ENCODE measurements at regions of chr3 and their contacts with region 1.

Region 1: GRCh38 chr3:151124476-151124875 is 39.0 kb downstream of the MED12L start:
- DNase-seq: no peak
- H3K4me3 ChIP-seq: no peak overlapping the region
- CTCF ChIP-seq: no peak

Region 2: GRCh38 chr3:150913133-150913922 is 211.1 kb before region 1 on chr3:
- in situ Hi-C with region 1: loop called (anchors 10 kb)
- DNase-seq: no peak
- H3K4me3 ChIP-seq: no peak overlapping the region
- CTCF ChIP-seq: no peak

Region 3: DNA sequence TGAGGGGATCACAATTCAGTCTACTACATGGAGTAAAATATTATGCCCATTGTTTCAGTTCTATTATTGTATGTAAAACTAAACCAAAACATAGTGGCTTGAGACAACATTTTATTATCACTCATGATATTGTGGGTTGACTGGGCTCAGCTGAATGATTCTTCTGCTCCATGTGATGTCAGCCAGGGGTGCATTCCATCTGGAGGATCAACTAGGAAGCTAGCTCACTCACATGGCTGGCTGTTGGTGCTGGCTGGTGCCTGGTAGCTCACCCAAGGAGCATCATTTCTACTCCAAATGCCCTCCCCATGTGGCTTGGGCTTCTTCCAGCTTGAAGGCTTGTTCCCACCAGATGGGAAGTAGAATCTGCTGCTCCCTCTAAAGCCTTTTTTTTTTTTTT is 100.1 kb before region 1 on chr3:
- in situ Hi-C with region 1: no loop called
- DNase-seq: no peak
- H3K4me3 ChIP-seq: no peak overlapping the region
- CTCF ChIP-seq: no peak

Region 4: DNA sequence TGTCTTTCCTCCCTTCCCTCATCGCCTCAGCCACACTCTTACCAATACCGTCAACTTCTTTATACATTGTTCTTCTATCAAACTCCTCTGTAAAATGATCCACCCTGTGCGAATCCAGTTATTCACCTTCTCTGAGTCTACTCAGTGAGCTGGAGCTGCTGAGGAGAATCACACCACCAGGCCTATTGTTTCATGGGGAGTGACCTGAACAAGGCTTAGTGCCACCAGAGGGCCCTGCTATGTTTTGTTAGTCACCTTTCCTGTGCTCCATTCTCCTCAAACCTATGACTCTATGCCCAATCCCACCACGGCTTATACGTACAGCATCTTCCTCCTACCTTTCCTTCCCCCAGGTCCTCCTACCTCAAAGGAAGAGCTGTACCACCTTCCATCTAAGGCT is 89.4 kb before region 1 on chr3:
- in situ Hi-C with region 1: no loop called
- DNase-seq: no peak
- H3K4me3 ChIP-seq: no peak overlapping the region
- CTCF ChIP-seq: no peak

Region 5: DNA sequence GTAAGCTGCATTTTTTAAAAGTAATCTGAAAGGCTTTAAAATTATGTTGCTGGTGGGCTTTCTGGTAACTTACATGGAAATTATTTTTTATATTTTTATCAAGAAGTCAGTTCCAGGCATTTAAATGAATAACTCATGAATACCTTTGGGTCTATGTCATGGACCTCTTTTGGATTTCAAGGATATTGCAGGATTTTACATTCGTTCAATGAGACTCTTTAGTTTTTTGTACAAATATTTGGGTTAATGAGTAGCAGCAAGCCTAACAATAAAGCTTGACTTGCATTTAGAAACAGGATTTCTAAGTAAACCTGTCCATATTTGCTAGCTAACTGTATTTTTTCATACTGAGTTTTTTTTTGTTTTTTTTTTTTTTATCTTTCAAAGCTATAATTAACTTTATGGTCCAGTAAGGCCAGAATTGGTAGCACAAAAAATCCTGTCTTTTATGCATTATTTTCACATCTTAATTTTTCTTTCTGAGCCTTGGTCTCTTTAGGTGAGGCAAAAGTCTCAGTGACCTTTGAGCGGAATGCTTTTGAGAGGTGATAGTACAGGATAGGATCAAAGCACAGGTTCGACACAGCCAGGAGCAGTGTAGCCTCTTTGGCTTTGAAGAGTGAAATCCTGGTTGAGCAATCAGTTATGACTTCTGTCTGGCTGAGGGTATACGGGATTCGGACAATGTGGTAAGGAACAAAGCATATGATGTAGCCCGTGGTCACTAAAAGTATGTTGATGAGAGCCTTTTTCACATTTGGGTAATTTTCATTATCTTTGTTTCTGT is 73.7 kb after region 1 on chr3:
- in situ Hi-C with region 1: no loop called
- DNase-seq: no peak
- H3K4me3 ChIP-seq: no peak overlapping the region
- CTCF ChIP-seq: no peak

Region 6: DNA sequence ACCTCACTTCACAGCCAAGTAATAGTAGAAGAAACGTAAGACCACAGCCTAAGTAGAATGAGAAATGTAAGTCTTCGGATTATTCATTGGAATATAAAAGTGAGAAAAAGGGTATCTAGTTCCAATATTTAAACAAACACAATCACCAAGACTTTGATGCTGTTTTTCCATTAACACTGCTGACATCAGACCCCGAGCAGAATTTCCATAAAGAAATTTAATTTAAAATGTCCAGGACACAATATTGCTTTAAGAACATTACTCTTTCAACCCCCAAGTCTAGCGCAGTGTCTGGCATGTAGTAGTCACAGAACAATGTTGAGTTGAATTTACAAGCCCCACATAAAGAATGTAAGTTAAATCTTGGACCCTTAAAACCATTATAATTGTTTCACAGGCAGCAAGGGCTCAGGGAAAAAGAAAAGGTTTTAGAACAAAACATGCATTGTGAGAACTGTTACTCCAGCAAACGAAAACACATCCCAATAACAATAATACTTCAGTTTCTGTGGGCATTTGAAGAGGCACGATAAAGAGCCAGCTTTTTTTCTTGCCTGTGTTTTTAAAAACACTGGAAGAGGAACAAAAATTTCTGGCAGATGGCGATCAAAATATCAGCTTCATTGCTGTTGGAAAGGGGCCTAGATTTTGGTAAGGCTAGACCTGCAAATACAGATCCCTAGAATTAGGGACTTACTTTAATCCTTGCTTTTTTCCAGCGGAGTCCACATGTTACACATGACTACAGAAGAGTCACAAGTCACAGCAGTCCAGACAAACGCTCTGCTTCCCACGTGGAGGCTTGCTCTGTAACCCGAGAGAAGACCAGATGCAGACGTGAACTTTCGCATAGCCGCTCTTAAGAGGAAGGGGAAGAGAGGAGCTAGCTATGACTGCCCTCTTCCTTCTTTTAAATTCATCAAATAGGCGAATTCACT is 414.2 kb after region 1 on chr3:
- in situ Hi-C with region 1: no loop called
- DNase-seq: no peak
- H3K4me3 ChIP-seq: no peak overlapping the region
- CTCF ChIP-seq: no peak